Panc1 (cell line): ENCODE measurements at regions of chr1 and their contacts with region 1.

Region 1: DNA sequence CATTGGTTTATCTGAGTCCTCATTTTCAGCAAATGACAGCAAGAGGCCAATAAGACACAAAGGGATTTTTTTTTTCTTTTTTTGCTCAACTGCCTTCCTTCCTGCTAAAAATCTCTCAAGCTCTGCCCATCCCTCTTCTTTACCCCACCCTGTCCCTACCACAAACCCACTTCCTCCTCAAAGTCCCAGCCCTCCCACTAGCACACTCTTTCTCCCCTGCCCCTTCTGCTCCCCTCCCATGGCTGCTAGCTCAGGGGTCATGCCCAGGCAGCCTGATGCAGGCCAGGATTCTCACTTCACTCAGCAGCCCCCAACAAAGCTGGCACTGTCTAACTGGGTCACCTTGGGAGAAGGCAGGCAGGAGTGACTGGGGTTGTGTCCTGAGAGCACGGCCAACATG is 28.8 kb upstream of the PPP2R5A start:
- DNase-seq: no peak
- ATAC-seq: no peak
- H3K4me3 ChIP-seq: no peak overlapping the region
- H3K27ac ChIP-seq: no peak overlapping the region
- H3K4me1 ChIP-seq: no peaks in the 10 kb centered on the region
- H3K27me3 ChIP-seq: no peaks in the 10 kb centered on the region; the same call in 1 of the 2 replicates
- CTCF ChIP-seq: no peak

Region 2: DNA sequence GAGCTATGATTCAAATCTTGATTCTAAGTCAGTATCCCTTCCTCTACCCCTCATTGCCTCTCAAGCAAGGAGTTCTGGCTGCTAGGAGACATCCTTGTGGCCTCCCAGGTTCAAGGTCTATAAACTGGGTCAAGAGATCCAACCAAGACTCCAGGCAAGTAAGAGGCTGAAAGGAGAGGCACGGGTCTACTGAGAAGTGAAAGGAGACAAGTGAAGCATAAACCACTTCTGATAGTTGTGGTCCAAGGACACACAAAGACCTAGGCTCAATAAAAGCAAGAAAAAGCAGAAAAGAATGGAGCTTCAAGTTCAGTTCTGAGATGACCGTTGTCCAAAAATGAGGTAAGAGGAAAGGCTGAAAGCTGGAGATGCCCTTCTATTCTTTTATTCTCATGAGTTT is 11.1 kb after region 1 on chr1:
- CTCF ChIA-PET with region 1: no interaction called
- POLR2A ChIA-PET with region 1: interaction called, 11 read pairs
- in situ Hi-C with region 1: no loop called
- intact Hi-C with region 1: no loop called
- DNase-seq: no peak
- ATAC-seq: no peak
- H3K4me3 ChIP-seq: no peak overlapping the region
- H3K27ac ChIP-seq: no peak overlapping the region
- H3K4me1 ChIP-seq: no peaks in the 10 kb centered on the region
- H3K27me3 ChIP-seq: peaks cover 16% of the 10 kb centered on the region; the same call in 1 of the 2 replicates
- CTCF ChIP-seq: no peak